ENCODE measurements at regions of chr2 and their contacts with region 1.

Region 1: GRCh38 chr2:197168705-197169104 is 141.9 kb downstream of the ANKRD44 start:
- DNase-seq: peak; percentile 84
- H3K4me3 Mint-ChIP-seq: no peak overlapping the region
- H3K27ac Mint-ChIP-seq: peak overlapping the region; percentile 73
- H3K4me1 Mint-ChIP-seq: peaks cover 72% of the 10 kb centered on the region
- H3K27me3 Mint-ChIP-seq: no peaks in the 10 kb centered on the region

Region 2: DNA sequence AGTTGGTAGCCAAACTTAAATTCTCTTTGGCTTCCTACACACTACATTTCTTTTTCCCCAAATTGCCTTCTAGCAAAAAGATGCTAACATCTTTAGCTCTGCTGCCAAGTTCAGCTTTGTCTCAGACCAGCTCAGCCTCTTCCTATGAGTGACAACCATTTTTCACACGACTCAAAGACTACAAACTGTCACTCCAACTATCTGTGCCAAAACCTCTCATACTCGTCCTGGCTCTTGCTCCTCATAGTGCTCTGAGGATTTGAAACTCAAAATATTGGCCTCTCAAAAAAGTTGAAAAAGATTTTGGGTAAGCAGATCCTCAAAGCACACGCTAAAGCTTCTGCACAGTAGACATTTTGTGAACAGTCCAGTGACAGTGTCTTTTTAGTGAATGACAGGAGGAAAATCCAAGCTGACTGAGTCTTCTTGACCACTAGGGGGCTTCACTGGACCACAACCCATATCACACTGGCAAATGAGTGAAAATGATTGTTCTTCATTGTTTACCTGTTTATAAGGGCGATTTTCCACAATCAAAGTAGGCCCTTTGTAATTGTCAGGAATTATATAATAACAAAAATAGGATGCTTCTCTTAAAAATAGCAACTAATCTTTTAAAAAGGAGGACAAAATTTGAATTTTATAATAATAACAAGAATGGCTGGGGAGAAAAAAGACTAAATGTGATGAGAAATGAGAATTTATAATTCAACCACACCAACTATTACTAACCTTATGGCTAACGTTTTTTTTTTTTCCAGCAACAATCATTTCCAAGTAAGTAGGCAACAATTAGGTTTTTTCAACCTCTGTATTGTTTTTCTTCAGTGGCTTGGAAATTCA is 156.7 kb before region 1 on chr2:
- CTCF ChIA-PET with region 1: interaction called, 4 read pairs
- POLR2A ChIA-PET with region 1: no interaction called
- intact Hi-C with region 1: loop called (anchors 1 kb)
- DNase-seq: peak; percentile 20
- H3K4me3 Mint-ChIP-seq: no peak overlapping the region
- H3K27ac Mint-ChIP-seq: peak overlapping the region; percentile 26
- H3K4me1 Mint-ChIP-seq: no peaks in the 10 kb centered on the region
- H3K27me3 Mint-ChIP-seq: no peaks in the 10 kb centered on the region

Region 3: DNA sequence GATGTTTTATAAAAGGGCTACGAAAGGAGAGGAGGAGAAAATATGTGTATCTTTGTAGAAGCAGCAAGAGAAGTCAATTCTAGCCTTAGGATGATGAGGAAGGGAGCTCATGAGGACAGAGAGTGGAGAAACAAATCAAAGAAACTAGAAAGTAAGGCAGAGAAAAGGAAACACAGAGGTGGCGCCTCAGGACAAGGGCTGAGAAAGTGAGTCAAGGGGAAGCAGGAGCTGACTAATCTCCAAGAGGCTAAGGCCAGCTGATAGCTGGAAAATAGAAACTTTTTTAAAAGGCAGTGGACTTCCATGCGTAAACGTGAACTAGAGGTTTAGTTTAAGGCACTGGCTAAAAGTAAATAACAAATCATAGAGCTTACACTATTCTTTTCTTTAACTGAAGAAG is 31.5 kb before region 1 on chr2:
- CTCF ChIA-PET with region 1: interaction called, 18 read pairs
- POLR2A ChIA-PET with region 1: no interaction called
- intact Hi-C with region 1: no loop called
- DNase-seq: peak; percentile 52
- H3K4me3 Mint-ChIP-seq: no peak overlapping the region
- H3K27ac Mint-ChIP-seq: peak overlapping the region; percentile 44
- H3K4me1 Mint-ChIP-seq: peaks cover 85% of the 10 kb centered on the region
- H3K27me3 Mint-ChIP-seq: no peaks in the 10 kb centered on the region

Region 4: DNA sequence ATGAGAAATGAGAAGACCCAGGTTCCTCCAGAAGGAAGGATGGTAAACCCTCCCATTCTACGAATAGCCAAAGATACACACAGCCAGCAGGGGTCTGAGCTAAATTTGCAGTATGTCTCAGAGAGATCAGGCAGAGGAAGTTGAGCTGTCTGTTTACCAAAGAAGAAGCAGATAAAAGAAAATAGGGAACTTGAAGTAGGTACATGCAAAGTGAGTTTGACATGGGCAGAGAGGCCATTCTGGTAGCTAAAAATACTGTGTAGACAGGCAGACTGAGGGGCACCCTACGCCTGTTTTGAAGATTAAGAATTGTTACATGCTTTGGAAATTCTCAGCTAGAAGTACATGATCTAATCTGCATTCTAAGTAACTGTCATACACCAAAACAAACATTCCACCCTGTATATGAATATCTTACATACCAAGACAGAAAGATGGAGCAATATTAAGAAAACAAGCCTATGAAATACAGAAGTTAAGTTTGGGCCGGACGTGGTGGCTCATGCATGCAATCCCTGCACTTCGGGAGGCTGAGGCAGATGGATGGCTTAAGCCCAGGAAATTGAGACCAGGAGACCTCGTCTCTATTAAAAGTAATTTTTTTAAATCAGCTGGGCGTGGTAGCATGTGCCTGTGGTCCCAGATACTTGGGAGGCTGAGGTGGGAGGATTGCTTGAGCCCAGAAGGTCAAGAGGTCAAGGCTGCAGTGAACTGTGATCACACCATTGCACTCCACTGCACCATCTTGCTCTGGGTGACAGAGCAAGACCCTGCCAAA is 16.1 kb before region 1 on chr2:
- CTCF ChIA-PET with region 1: interaction called, 11 read pairs
- POLR2A ChIA-PET with region 1: no interaction called
- intact Hi-C with region 1: no loop called
- DNase-seq: no peak
- H3K4me3 Mint-ChIP-seq: no peak overlapping the region
- H3K27ac Mint-ChIP-seq: peak overlapping the region; percentile 76
- H3K4me1 Mint-ChIP-seq: peaks cover 69% of the 10 kb centered on the region
- H3K27me3 Mint-ChIP-seq: no peaks in the 10 kb centered on the region

Region 5: DNA sequence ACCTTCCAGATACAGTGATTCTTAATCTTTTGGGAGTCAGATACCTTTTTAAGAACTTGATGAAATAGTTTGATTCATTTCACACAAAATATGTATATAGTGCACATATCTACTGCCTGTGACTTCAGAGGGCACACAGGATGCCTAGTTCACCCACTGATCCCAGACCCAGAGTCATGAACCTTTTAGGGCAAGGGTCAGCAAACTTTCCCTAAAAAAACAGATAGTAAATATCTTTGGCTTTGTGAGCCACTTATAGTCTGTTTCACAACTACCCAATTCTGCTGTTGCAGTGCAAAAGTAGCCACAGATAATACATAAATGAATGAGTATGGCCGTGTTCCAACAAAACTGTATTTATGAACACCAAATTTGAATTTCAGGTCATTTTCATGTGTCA is 17.0 kb after region 1 on chr2:
- CTCF ChIA-PET with region 1: interaction called, 50 read pairs
- POLR2A ChIA-PET with region 1: no interaction called
- intact Hi-C with region 1: loop called (anchors 2 kb)
- DNase-seq: no peak
- H3K4me3 Mint-ChIP-seq: no peak overlapping the region
- H3K27ac Mint-ChIP-seq: no peak overlapping the region
- H3K4me1 Mint-ChIP-seq: peaks cover 74% of the 10 kb centered on the region
- H3K27me3 Mint-ChIP-seq: no peaks in the 10 kb centered on the region